ENCODE measurements at regions of chr2 and their contacts with region 1.

Region 1: GRCh38 chr2:222860740-222861410 is at the start of gene ACSL3:
- DNase-seq: peak; percentile 95
- H3K4me3 Mint-ChIP-seq: peak within 1 kb of the TSS; percentile 80
- H3K27ac Mint-ChIP-seq: peak within 1 kb of the TSS; percentile 98
- H3K4me1 Mint-ChIP-seq: peaks cover 9% of the 10 kb centered on the region
- H3K27me3 Mint-ChIP-seq: peaks cover 15% of the 10 kb centered on the region
- total RNA-seq, gene ACSL3: 75.4 and 79.4 TPM in 2 replicates

Region 2: GRCh38 chr2:222690564-222691200 is 170.2 kb before region 1 on chr2:
- intact Hi-C with region 1: loop called (anchors 5 kb)
- DNase-seq: peak; percentile 59
- H3K4me3 Mint-ChIP-seq: no peak overlapping the region
- H3K27ac Mint-ChIP-seq: no peak overlapping the region
- H3K4me1 Mint-ChIP-seq: peaks cover 5% of the 10 kb centered on the region
- H3K27me3 Mint-ChIP-seq: peaks cover 8% of the 10 kb centered on the region

Region 3: DNA sequence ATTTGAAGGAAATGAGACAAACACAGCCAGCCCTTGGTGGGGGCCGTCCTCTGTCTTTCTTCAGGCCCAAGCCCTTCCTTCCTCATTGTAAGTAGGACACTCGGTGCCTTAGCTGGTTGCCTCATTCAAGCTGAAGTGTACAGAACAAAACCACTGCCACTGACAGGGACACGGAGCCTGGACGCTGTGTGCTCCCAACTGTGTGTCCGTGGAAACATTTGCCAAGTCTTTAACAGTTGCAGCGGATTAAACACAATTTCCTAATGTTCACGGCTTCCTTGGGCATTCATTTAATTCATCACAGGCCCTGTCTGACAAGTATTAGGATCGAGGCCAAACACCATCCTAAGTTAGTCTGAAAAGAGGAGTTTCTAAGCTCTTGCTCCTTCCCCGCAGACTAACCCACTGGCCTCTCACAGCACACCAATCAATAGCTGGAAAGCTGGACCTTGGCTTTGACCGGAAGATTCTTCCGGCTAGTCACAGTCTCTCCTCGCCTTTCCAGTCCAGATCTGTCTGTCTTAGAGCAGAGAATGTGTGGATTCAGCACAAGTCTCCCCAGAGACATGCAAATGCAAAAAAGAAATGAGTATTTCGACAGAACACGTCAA is 68.8 kb before region 1 on chr2:
- intact Hi-C with region 1: loop called (anchors 1 kb)
- DNase-seq: no peak
- H3K4me3 Mint-ChIP-seq: no peak overlapping the region
- H3K27ac Mint-ChIP-seq: no peak overlapping the region
- H3K4me1 Mint-ChIP-seq: peaks cover 14% of the 10 kb centered on the region
- H3K27me3 Mint-ChIP-seq: peaks cover 20% of the 10 kb centered on the region

Region 4: GRCh38 chr2:222903234-222904220 is 42.7 kb after region 1 on chr2:
- intact Hi-C with region 1: loop called (anchors 2 kb)
- DNase-seq: no peak
- H3K4me3 Mint-ChIP-seq: no peak overlapping the region
- H3K27ac Mint-ChIP-seq: no peak overlapping the region
- H3K4me1 Mint-ChIP-seq: peaks cover 15% of the 10 kb centered on the region
- H3K27me3 Mint-ChIP-seq: no peaks in the 10 kb centered on the region